IMR-90 (cell line): ENCODE measurements at regions of chr13 and their contacts with region 1.

Region 1: DNA sequence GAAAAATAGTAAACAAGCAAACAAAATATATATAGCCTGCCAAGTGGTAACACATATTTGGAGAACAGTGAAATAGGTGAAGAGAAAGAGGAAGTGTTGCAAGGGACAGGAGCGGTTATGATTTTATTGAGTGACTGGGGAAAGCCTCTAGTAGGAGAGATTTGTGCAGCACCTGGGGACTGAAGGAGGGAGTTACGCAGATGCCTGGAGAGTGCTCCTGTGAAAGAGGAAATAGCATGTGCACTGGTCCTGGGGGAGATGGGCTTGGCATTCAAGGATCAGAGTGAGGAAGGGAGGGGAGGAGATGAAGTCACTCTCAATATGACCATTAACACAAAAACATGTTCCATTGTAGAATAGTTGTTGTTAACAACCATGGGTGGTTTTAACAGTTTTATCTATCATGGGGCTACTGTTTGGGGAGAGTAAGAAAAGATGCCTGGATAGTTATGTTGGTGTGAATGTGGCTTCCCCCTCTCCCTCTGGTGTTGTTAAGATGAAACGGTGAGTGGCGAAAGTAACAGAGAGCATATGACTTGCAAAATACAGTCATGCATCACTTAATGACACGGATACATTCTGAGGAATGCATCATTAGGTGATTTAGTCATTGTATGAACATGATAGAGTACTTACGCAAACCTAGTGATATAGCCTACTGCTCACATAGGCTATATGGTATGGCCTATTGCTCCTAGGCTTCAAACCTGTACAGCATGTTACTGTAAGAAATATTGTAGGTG is 251.6 kb upstream of the ARGLU1 start:
- DNase-seq: no peak
- ATAC-seq: no peak
- H3K4me3 ChIP-seq: no peak overlapping the region
- H3K27ac ChIP-seq: no peak overlapping the region
- H3K4me1 ChIP-seq: no peaks in the 10 kb centered on the region
- H3K27me3 ChIP-seq: no peaks in the 10 kb centered on the region
- CTCF ChIP-seq: no peak
- POLR2A ChIP-seq: no peak
- RAD21 ChIP-seq: no peak

Region 2: DNA sequence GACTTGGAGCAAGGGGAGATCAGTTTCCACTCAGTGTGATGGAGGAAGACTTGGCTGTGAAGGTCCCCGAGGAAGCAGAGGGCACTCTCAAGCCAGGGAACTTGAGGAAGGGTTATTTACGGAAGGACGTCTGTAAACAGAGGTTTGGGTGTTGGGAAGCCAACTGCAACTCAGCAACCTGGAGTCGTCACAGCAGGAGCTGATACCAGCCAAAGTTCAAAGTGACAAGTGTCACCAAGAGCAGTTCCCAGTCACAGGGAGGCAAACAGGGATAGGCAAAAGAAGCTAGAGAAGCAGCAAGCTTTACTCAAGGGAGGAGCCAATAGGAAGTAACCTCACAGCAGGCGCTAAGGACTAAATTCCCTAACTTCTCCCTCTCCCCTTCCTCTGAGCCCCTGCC is 489.6 kb before region 1 on chr13:
- CTCF ChIA-PET with region 1: no interaction called
- POLR2A ChIA-PET with region 1: no interaction called
- dilution Hi-C with region 1: no loop called
- in situ Hi-C with region 1: no loop called
- intact Hi-C with region 1: loop called (anchors 10 kb)
- DNase-seq: no peak
- ATAC-seq: no peak
- H3K4me3 ChIP-seq: no peak overlapping the region
- H3K27ac ChIP-seq: no peak overlapping the region
- H3K4me1 ChIP-seq: no peaks in the 10 kb centered on the region
- H3K27me3 ChIP-seq: no peaks in the 10 kb centered on the region
- CTCF ChIP-seq: no peak
- POLR2A ChIP-seq: no peak
- RAD21 ChIP-seq: no peak

Region 3: GRCh38 chr13:106756446-106756845 is 63.1 kb before region 1 on chr13:
- CTCF ChIA-PET with region 1: no interaction called
- POLR2A ChIA-PET with region 1: no interaction called
- dilution Hi-C with region 1: no loop called
- in situ Hi-C with region 1: no loop called
- intact Hi-C with region 1: no loop called
- DNase-seq: no peak
- ATAC-seq: no peak
- H3K4me3 ChIP-seq: no peak overlapping the region
- H3K27ac ChIP-seq: no peak overlapping the region
- H3K4me1 ChIP-seq: no peaks in the 10 kb centered on the region
- H3K27me3 ChIP-seq: no peaks in the 10 kb centered on the region
- CTCF ChIP-seq: no peak
- POLR2A ChIP-seq: no peak
- RAD21 ChIP-seq: no peak

Region 4: GRCh38 chr13:106986033-106986484 is 166.5 kb after region 1 on chr13:
- CTCF ChIA-PET with region 1: no interaction called
- POLR2A ChIA-PET with region 1: no interaction called
- dilution Hi-C with region 1: no loop called
- in situ Hi-C with region 1: no loop called
- intact Hi-C with region 1: no loop called
- DNase-seq: peak; percentile 34
- ATAC-seq: peak; percentile 62
- H3K4me3 ChIP-seq: no peak overlapping the region
- H3K27ac ChIP-seq: no peak overlapping the region
- H3K4me1 ChIP-seq: peaks cover 5% of the 10 kb centered on the region; the same call in 1 of the 2 replicates
- H3K27me3 ChIP-seq: no peaks in the 10 kb centered on the region
- CTCF ChIP-seq: no peak
- POLR2A ChIP-seq: no peak
- RAD21 ChIP-seq: no peak